Common myeloid progenitor, CD34-positive (primary cell): ENCODE measurements at regions of chr15 and their contacts with region 1.

Region 1: GRCh38 chr15:70259028-70259424 is 161.3 kb upstream of the TLE3 start:
- DNase-seq: peak; percentile 80 to 88 (median 84)
- H3K4me3 ChIP-seq: peak overlapping the region in 2 of 7 experiments; percentile 1 to 41
- H3K27ac ChIP-seq: peak overlapping the region; percentile 21 to 52
- H3K4me1 ChIP-seq: peaks cover 9 to 71% (median 64%) of the 10 kb centered on the region in 4 experiments
- H3K27me3 ChIP-seq: no peaks in the 10 kb centered on the region

Region 2: DNA sequence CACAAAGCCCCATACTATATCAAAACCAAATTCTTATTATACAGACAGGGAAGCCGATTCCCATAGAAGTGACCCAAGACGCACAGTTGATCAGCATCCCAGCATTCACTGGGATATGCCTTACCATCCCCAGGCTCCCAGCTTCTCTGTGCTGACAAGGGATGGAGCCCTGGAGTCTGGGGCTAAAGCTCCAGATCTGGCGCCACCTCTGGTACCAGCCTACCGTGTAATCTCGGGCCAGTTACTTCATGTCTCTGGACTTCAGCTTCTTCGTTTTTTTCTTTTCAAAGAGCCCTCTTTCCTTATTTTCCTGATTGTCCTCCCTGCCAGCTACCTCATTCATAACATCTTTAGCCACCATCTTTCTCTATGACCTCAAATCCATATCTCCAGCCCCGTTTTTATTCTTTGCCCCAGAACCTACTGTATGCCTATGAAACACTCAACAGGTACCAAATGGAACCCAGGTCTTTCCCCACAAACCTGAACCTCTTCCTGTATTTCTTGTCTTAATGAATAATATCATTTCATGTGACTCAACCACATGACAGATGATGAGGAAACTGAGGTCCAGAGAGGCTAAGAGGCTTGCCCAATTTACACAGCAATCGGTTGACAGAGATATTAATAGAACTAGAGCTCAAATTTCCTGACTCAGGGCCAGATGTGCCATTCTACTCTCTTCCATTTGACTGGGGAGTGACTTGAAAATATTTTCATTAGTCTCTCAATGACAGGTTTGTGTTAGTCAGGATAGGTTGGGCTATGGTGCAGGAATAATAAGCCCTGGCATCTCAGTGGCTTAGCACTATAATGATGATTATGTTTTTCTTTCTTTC is 76.0 kb before region 1 on chr15:
- CTCF ChIA-PET with region 1: interaction called, 10 read pairs
- POLR2A ChIA-PET with region 1: no interaction called
- DNase-seq: no peak
- H3K4me3 ChIP-seq: no peak overlapping the region
- H3K27ac ChIP-seq: no peak overlapping the region
- H3K4me1 ChIP-seq: peaks cover 0 to 17% (median 2%) of the 10 kb centered on the region in 4 experiments
- H3K27me3 ChIP-seq: no peaks in the 10 kb centered on the region

Region 3: GRCh38 chr15:70210528-70210927 is 48.5 kb before region 1 on chr15:
- CTCF ChIA-PET with region 1: no interaction called
- POLR2A ChIA-PET with region 1: no interaction called
- DNase-seq: peak in 1 of 3 donors; percentile 38
- H3K4me3 ChIP-seq: no peak overlapping the region
- H3K27ac ChIP-seq: no peak overlapping the region
- H3K4me1 ChIP-seq: peaks cover 0 to 1% (median 0%) of the 10 kb centered on the region in 4 experiments
- H3K27me3 ChIP-seq: no peaks in the 10 kb centered on the region